MCF 10A (cell line): ENCODE measurements at regions of chr3 and their contacts with region 1.

Region 1: DNA sequence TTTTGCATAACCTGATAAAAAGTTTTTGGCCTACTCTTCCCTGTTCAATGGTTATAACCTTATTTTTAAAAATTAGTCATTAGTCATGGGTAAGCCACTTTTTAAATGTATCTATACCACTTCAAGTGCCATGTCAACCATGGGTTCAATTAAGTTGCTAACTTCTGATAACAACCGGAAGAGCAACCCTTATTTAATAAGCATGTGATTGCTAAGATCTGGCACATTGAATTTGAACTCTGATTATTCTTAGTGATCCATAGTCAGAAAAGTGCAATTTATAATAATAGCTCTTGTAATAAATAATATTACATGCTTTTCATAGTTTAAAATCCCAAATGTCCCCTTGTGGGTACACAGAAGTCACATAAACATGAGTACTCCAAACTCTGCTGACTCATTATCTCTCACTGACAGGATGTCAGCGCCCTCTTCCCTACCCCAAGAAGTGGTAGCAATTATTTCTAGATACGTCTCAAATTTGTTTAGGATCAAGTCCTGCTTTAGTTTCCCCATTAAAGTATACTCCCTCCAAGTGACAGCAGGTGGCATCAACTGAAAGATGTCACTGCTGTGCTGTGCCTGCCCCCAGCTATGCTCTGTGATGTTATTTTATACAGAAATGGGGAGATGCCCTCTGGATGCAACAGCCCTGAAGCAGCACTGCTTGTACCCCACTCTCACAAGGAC is 18.6 kb downstream of the SAMD7 start:
- DNase-seq: no peak
- H3K4me3 Mint-ChIP-seq: no peak overlapping the region
- H3K27ac Mint-ChIP-seq: no peak overlapping the region
- H3K4me1 Mint-ChIP-seq: peaks cover 2% of the 10 kb centered on the region
- H3K27me3 Mint-ChIP-seq: peaks cover 18% of the 10 kb centered on the region
- CTCF ChIP-seq: no peak

Region 2: GRCh38 chr3:169886671-169887070 is 43.3 kb before region 1 on chr3:
- CTCF ChIA-PET with region 1: interaction called, 3 read pairs
- POLR2A ChIA-PET with region 1: no interaction called
- intact Hi-C with region 1: loop called (anchors 5 kb)
- DNase-seq: peak; percentile 85
- H3K4me3 Mint-ChIP-seq: no peak overlapping the region
- H3K27ac Mint-ChIP-seq: peak overlapping the region; percentile 46
- H3K4me1 Mint-ChIP-seq: peaks cover 6% of the 10 kb centered on the region
- H3K27me3 Mint-ChIP-seq: no peaks in the 10 kb centered on the region
- CTCF ChIP-seq: no peak